CD8-positive, alpha-beta memory T cell (primary cell): ENCODE measurements at regions of chr1 and their contacts with region 1.

Region 1: DNA sequence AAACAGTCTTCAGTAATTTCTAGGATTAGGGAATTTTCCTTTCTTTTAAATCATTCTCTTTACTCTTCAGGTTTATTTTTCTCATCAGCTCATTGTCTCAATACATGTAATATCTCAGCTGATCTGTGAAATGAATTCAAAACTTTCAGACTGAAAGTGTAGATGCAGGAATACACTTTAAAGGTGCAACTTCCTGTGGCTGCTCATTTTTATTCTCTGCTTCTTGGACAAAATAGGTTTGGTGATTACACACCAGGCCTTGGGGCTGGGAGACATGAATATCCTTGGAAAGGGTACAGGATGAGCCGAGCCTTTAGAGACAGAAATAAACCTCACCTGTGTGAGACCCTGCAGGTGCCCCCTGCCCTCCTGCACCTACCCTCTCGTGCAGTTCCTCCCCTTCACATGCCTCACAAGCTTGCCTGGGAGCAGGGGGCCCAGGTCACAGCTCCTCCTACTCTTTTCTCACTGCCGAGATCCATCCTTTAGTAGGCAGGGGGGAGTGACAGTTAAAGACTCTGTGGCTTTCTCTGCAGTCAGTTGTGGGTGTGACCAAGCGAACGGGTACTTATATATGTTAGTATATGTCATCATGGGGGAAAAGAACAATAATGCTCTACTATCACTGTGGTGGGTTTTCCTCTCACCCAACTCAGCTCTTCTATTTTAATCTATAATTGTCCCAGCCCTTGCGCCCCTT is 23.6 kb downstream of the XCL2 start:
- DNase-seq: peak; percentile 21 to 77 (median 27)
- H3K4me3 ChIP-seq: no peak overlapping the region
- H3K4me3 Mint-ChIP-seq: peak overlapping the region; percentile 62 to 87 (median 80)
- H3K27ac ChIP-seq: no peak overlapping the region
- H3K27ac Mint-ChIP-seq: peak overlapping the region; percentile 63 to 97 (median 85)
- H3K4me1 ChIP-seq: peaks cover 61% of the 10 kb centered on the region
- H3K4me1 Mint-ChIP-seq: peaks cover 67 to 88% (median 72%) of the 10 kb centered on the region in 3 donors
- H3K27me3 ChIP-seq: no peaks in the 10 kb centered on the region
- H3K27me3 Mint-ChIP-seq: no peaks in the 10 kb centered on the region

Region 2: DNA sequence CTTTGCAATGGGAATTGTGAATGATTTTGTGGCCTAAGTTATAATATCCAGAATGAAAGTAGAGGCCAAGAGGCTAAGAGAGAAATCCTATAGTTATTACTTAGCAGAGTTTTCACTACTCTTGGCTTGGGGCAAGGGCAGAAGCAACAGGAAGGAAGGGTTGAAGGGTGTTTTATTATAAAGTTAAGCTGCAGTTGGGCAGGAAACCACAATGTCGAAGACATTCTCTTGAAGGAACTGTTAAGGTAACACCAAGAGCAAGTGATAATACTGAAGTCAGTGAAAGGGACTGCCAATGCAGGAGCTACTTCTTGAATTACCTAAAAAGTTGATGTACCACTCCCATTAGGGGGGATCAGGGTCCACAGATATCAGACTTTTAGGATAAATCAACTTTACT is 15.3 kb after region 1 on chr1:
- CTCF ChIA-PET with region 1: interaction called, 7 read pairs
- POLR2A ChIA-PET with region 1: interaction called, 11 read pairs
- DNase-seq: peak in 3 of 5 donors; percentile 56 to 66 (median 58)
- H3K4me3 ChIP-seq: peak overlapping the region; percentile 9
- H3K4me3 Mint-ChIP-seq: peak overlapping the region; percentile 14 to 79 (median 74)
- H3K27ac ChIP-seq: no peak overlapping the region
- H3K27ac Mint-ChIP-seq: peak overlapping the region; percentile 68 to 96 (median 82)
- H3K4me1 ChIP-seq: peaks cover 63% of the 10 kb centered on the region
- H3K4me1 Mint-ChIP-seq: peaks cover 70 to 91% (median 91%) of the 10 kb centered on the region in 3 donors
- H3K27me3 ChIP-seq: no peaks in the 10 kb centered on the region
- H3K27me3 Mint-ChIP-seq: no peaks in the 10 kb centered on the region